ENCODE measurements at regions of chr11 and their contacts with region 1.

Region 1: DNA sequence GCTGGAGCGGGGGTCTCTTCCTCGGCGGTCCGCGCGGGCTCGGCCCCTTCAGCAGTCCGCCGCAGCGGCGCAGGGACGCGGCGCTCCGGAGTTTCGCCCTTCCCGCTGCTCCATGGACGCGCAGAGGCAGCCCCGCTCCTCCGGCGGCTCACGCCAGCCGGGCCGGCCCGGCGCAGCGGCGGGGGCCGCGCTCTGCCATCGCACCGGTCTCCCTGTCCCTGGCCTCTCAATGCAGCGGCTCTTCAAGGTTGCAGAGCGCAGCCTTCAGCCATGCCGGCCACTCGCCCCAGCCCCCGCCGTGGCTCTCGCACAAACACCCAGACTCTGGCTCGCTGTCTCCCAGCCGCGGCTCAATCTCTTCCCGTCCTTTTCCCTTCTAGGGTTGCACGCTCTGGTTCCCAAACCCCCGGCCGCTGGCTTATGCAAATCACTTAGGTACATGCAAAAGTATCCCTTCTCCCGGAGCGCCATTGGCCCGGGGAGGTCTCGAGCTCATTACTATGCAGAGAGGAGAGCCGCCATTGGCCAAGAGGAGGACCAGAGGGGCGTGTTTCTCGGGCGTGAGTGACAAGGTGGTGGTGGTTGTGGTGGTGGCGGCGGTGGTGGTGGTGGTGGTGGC is at the start of gene LGR4:
- DNase-seq: peak; percentile 94
- total RNA-seq, gene LGR4: 22.6 TPM

Region 2: GRCh38 chr11:27201454-27202236 is 270.9 kb before region 1 on chr11:
- intact Hi-C with region 1: loop called (anchors 5 kb)
- DNase-seq: no peak

Region 3: DNA sequence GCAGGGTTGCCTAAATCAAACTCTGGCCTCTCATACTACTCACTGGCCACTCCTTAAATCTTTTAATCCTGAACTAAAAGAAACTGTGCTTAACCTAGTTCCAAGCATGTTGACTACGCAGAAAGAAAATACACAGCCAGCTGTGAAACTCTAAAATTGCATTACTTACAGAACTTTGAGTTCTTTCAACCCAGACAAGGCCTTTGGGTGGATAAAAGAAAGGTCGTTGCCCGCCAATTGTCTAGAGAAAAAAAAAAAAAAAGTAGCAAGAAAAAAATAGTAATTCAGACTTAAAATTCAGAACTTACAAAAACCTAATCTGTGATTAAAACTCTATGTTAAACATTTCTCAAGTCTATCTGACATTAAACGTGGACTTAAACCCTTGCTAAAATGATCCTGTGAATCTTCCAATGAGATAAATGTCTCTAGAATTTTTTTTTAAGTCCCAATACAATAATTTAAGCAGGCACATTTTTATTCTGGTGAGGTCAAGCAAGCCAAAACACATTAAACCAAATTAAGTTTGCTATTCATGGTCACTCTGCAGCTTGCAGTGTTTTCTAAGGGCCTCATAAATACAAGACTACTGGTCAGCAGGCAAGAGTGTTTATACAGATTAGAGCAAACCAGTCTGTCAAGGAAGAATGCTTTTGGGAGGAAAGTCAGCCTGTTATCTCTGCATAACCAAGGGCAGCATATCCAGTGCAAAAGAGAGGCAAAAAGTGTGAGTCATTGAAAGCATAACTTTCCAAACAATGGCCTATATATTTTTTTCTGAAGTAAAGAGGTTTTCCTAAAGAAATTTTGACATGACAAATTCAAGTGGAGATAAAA is 80.0 kb before region 1 on chr11:
- intact Hi-C with region 1: loop called (anchors 5 kb)
- DNase-seq: no peak

Region 4: DNA sequence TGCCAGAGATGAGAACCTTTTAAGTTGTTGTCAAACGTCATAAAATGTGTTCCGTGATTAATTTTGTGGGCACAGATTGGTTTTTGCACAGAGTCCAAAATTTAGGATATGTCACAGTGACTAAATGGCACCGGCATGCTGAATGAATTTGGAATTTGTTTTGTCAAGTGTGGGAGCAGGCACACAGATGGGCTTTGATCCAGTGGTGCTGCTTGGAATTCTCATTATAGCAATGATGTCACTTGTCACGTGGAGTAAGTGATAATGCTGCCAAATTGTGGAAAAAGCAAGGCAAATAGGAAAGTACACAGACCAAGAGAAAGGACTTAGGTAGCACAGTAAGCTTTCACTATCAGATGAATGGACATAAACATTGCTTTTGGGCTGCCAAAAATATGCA is 42.1 kb after region 1 on chr11:
- intact Hi-C with region 1: no loop called
- DNase-seq: no peak

Region 5: DNA sequence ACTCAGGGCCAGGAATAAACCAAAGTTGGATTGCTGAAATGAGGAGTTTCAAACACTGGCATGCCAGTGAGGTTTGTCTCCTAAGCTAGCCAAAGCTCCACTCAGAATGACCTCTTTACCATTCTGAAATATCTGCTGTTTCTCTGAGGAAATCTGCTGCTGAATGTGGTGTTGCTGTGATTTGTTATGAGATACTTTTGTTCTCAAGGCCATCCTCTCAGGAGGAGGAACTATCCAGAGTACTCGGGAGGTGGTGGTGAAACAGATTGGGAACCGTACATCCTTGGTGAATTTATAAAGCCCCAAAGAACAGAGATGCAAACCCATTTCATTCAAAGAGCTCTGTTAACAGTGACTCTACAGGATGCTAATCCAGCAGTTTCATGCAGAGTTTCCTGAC is 177.3 kb after region 1 on chr11:
- intact Hi-C with region 1: no loop called
- DNase-seq: no peak